ENCODE measurements at regions of chr16 and their contacts with region 1.

Region 1: DNA sequence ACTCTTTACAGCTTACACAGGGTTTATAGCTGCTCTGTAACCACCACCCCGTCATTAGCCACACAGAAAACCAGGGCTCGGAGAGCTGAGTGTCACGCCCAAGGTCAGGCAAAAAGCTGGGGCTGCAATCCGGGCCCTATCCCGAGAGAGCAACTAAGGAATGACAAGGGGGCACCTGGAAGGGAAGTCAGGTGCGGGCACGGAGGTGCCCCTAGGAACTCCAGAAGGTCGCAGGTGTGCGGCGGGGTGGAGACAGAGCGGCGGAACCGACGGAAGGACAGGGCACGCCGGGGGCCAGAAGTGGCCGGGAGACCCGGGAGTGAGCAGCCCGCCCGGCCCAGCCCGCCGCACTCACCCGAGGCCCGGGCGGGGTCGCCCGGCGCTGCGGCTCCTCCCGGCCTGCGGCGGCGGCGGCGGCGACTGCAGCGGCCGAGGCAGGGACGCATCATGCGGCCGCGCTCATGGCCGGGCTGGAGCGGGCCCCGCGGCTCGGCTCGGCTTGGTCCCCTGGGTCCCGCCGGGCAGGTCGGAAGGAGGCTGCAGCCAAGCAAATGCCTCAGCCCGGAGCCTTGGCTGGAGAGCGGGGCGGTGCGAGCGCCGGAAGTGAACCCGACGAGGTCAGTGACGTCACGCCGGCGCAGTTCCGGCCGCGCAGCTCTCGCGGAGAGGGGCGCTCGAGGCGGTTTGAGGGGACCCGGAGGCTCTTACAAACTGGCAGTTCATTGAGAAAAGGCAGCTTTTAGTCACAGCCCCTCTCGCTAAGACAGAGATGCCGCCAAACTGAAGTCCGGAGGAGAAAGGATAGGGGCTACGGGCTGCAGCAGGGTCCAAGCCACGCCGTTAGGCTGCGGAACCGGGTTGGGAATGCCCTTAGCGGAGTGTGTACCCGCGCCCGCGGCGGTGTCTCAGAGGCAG is at the start of gene ZDHHC7:
- DNase-seq: peak; percentile 80
- H3K27ac ChIP-seq: peak within 1 kb of the TSS; percentile 93
- CTCF ChIP-seq: no peak

Region 2: DNA sequence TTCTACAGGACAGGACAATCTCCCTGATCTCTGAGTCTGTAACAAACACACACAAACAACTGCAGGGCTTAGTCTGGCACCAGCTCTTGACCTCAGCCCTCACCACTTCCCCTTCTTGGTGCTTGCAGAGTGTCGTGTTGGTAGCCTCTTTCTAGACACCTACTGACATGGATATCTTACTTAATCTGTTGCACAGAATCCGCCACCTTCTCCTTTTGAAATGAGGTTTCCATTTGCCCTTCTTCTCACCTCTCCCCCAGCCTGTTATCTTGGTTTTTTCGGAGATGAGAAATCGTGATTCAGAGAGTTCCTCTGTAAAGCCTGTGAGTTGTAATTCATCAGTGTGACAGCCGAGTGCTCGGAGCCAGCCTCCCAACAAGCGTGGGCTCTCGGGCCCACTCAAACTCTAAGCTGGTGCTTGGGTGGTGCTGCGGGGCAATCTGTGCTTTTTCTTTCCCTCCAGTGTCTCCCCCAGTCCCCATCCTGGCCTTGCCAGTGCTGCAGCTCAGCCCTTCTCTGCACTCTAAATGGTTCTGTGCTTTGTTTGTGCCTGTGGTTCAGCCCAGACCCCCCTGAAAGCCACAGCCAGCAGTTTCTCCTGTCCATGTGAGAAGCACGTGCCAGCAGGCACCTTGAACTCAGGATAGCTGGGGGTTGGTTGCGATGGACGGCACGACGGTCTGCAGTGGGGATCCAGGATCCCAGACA is 44.5 kb after region 1 on chr16:
- CTCF ChIA-PET with region 1: no interaction called
- POLR2A ChIA-PET with region 1: no interaction called
- DNase-seq: no peak
- H3K27ac ChIP-seq: no peak overlapping the region
- CTCF ChIP-seq: no peak

Region 3: DNA sequence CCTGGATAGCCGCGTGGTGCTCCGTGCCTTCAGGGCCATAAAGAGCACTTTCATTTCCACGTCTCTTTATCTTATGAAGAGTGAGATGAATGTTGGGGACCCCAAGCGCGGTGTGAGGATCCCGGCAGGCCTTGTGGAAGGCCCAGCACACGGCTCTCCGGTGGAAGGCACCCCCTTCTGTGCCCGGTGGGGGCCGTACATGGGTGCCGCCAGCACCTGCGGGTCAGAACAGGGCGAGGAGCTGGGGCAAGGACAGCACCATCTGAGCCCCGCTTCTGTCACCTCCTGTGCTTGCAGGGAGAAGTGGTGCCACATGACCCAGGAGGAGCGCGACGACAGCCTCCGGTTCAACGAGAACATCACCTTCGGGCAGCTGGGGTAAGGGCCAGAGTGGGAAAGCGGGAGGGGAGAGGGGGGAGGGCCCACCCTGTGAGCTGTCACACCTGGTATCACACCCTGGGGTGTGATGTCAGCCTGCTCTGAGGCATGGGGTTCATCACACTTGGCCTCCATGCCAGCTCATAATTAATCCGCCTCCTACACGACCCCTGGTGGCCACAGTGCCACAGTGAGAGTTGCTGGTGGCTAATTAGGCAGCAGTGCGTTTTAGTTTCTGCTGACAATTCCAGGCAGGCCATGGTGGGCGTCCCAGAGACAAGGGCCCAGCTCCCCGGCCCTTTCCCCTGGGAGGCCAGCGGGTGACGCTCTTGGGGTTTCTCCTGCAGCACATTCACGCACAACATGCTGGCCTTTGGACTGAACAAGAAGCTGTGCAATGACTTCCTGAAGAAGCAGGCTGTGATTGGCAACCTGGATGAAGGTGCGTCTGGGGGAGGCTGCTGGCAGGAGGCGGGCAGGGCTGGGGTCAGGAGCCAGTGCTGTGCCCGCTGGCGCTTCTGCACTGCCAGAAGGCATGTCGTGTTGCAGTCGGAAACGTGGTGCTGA is 75.4 kb after region 1 on chr16:
- CTCF ChIA-PET with region 1: interaction called, 10 read pairs
- POLR2A ChIA-PET with region 1: no interaction called
- DNase-seq: peak; percentile 85
- H3K27ac ChIP-seq: no peak overlapping the region; the same call in 1 of the 2 replicates
- CTCF ChIP-seq: peak; percentile 73

Measured in RWPE1 (cell line).